Activated CD4-positive, alpha-beta memory T cell treated with anti-CD3 and anti-CD28 coated beads for 36 hours (primary cell): ENCODE measurements at regions of chr22 and their contacts with region 1.

Region 1: GRCh38 chr22:28402539-28402938 is 277.1 kb downstream of the TTC28 start:
- DNase-seq: no peak
- H3K4me3 Mint-ChIP-seq: no peak overlapping the region
- H3K27ac Mint-ChIP-seq: peak overlapping the region; percentile 71
- H3K4me1 Mint-ChIP-seq: peaks cover 18% of the 10 kb centered on the region
- H3K27me3 Mint-ChIP-seq: no peaks in the 10 kb centered on the region

Region 2: GRCh38 chr22:28310299-28310698 is 92.2 kb before region 1 on chr22:
- CTCF ChIA-PET with region 1: no interaction called
- POLR2A ChIA-PET with region 1: no interaction called
- intact Hi-C with region 1: no loop called
- DNase-seq: no peak
- H3K4me3 Mint-ChIP-seq: no peak overlapping the region
- H3K27ac Mint-ChIP-seq: no peak overlapping the region
- H3K4me1 Mint-ChIP-seq: no peaks in the 10 kb centered on the region
- H3K27me3 Mint-ChIP-seq: peaks cover 4% of the 10 kb centered on the region

Region 3: GRCh38 chr22:28379075-28379779 is 23.3 kb before region 1 on chr22:
- CTCF ChIA-PET with region 1: no interaction called
- POLR2A ChIA-PET with region 1: no interaction called
- intact Hi-C with region 1: loop called (anchors 1 kb)
- DNase-seq: no peak
- H3K4me3 Mint-ChIP-seq: no peak overlapping the region
- H3K27ac Mint-ChIP-seq: no peak overlapping the region
- H3K4me1 Mint-ChIP-seq: peaks cover 3% of the 10 kb centered on the region
- H3K27me3 Mint-ChIP-seq: peaks cover 2% of the 10 kb centered on the region

Region 4: DNA sequence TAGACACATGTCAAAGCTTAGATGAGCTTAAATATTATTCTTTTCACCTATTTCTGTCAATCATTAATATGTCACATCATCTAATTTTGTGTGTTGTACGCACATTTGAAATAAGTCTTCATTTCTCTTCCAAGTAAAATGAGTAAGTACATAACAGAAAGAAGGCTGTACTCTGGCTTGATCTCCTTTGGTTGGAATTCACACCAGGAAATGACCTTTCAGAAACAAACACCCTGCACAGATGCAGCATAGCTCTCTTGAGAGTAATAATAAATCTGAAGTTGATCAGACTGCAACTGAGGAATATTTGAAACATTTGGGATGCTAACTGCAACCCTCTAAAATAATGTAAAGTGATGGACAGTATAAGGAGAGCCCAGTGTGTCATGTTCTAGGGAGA is 11.5 kb after region 1 on chr22:
- CTCF ChIA-PET with region 1: no interaction called
- POLR2A ChIA-PET with region 1: no interaction called
- intact Hi-C with region 1: no loop called
- DNase-seq: no peak
- H3K4me3 Mint-ChIP-seq: no peak overlapping the region
- H3K27ac Mint-ChIP-seq: no peak overlapping the region
- H3K4me1 Mint-ChIP-seq: peaks cover 2% of the 10 kb centered on the region
- H3K27me3 Mint-ChIP-seq: peaks cover 15% of the 10 kb centered on the region

Region 5: DNA sequence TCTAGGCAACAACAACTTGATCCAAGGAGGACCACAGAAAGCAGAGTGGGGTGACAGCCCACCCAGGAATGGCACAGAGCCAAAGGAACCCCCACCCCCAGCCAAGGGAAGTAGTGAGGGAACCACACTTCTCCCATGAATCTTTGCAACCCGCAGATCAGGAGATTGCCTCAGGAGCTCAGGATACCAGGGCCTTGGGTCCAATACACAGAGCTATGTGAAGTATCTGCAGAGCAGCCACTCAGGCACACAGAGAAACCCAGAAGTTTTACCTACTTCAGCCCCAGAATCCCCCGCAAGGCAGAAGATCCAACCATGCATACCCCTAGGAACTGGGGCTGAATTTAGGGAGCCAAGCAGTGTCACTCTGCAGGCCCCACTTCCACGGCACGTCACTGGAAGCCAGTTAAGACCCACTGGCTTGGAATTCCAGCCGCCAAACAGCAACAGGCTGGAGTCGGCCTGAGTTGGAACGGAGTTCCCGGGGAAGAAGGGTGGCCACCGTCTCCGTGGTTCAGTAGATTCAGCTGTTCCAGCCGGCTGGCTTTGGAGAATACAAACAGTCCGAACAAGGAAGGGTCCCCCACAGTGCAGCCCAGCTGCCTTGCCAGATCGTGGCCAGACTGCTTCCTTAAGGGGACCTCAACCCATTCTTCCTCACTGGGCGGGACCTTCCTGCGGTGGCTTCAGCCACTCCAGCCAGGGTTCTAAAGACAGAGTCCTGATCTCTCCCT is 103.0 kb after region 1 on chr22:
- CTCF ChIA-PET with region 1: no interaction called
- POLR2A ChIA-PET with region 1: no interaction called
- intact Hi-C with region 1: no loop called
- DNase-seq: no peak
- H3K4me3 Mint-ChIP-seq: no peak overlapping the region
- H3K27ac Mint-ChIP-seq: no peak overlapping the region
- H3K4me1 Mint-ChIP-seq: no peaks in the 10 kb centered on the region
- H3K27me3 Mint-ChIP-seq: peaks cover 14% of the 10 kb centered on the region

Region 6: GRCh38 chr22:28570691-28571373 is 168.3 kb after region 1 on chr22:
- CTCF ChIA-PET with region 1: no interaction called
- POLR2A ChIA-PET with region 1: no interaction called
- intact Hi-C with region 1: no loop called
- DNase-seq: no peak
- H3K4me3 Mint-ChIP-seq: no peak overlapping the region
- H3K27ac Mint-ChIP-seq: no peak overlapping the region
- H3K4me1 Mint-ChIP-seq: no peaks in the 10 kb centered on the region
- H3K27me3 Mint-ChIP-seq: peaks cover 20% of the 10 kb centered on the region